Stomach (tissue), 19 donors: ENCODE measurements at regions of chr16 and their contacts with region 1.

Region 1: GRCh38 chr16:3983081-3983520 is 102.6 kb upstream of the CREBBP start:
- DNase-seq: peak; percentile 82 to 91
- H3K4me3 ChIP-seq: no peak overlapping the region
- H3K27ac ChIP-seq: no peak overlapping the region
- H3K4me1 ChIP-seq: peaks cover 0 to 22% (median 17%) of the 10 kb centered on the region in 4 donors
- H3K27me3 ChIP-seq: no peaks in the 10 kb centered on the region
- CTCF ChIP-seq: peak in 5 of 7 experiments; percentile 58 to 93 (median 72)
- EP300 ChIP-seq: no peak
- POLR2A ChIP-seq: no peak

Region 2: DNA sequence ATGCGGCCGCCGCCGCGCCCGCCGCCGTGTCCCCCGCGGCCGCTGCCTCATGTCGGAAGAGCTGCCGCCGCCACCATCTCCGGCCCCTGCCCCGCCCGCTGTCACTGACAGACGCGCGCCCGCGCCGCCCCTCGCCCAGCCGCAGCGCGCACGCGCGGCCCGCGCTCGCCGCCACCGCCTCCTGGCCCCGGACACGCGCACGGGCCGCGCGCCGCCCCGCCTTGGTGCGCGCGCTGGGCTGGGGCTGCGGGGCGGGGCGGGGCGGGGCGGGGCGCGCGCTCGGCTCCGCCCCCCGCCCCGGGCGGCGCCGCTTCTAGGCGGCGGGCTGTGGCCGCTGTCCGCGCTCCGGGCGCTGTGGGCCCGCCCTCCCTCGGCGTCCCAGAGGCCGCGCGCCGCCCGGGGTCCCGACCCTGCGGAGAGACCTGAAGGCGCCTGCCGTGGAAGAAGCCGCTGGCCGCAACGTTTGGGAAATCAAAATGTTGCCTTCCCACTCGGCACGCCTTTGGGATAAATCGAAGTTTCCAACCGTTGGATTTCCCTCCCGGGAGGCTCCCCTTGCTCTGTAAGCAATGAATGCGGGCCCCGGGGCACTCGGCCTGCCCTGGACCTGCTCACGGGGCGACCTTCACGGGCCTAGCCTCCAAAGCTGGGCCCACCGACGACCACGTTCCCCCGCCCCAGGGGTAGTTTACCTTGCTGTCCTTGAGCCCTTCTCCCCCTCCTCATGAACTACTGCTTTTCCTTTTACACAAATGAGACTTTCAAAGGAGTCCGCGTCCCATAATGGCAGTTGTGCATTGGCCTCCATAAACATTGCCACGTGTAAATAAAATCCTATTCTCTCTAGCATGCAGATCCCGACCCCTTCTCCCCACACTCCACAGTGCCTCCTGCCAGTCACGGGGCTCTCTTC is 133.5 kb after region 1 on chr16 and contains the start of gene ADCY9:
- intact Hi-C with region 1: loop called (anchors 10 kb)
- DNase-seq: peak; percentile 80 to 93
- H3K4me3 ChIP-seq: peak within 1 kb of the TSS; percentile 64 to 78 (median 70)
- H3K27ac ChIP-seq: peak within 1 kb of the TSS; percentile 50 to 85 (median 76)
- H3K4me1 ChIP-seq: peaks cover 29 to 49% (median 42%) of the 10 kb centered on the region in 4 donors
- H3K27me3 ChIP-seq: peaks cover 0 to 4% (median 0%) of the 10 kb centered on the region in 3 donors
- CTCF ChIP-seq: no peak
- EP300 ChIP-seq: no peak
- POLR2A ChIP-seq: no peak
- total RNA-seq, gene ADCY9: 12.1 to 55.0 (median 15.8) TPM